Activated naive CD4-positive, alpha-beta T cell treated with anti-CD3 and anti-CD28 coated beads for 36 hours (primary cell): ENCODE measurements at regions of chr13 and their contacts with region 1.

Region 1: GRCh38 chr13:21638319-21639282 is 32.3 kb upstream of the FGF9 start:
- DNase-seq: peak; percentile 54
- H3K4me3 Mint-ChIP-seq: no peak overlapping the region
- H3K27ac Mint-ChIP-seq: no peak overlapping the region
- H3K4me1 Mint-ChIP-seq: no peaks in the 10 kb centered on the region
- H3K27me3 Mint-ChIP-seq: peaks cover 3% of the 10 kb centered on the region

Region 2: DNA sequence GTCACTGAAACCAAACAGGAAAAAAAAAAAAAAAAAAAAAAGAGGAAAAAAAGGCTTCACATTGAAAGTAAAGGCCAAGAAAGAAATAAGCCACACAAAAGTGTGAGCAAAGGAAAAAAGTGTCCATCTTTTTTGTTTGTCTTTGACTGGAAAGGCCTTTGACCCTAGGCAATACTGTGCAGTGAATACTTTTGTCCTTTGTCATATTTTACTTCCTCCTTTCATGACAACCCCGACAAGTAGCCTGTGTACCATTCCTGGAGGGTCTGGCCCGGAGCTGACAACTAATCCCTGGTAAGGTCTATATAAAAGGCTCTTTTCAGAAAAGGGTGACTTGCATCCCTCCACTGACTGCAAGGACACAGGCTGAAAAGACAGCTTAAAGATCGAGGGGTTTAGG is 21.7 kb before region 1 on chr13:
- CTCF ChIA-PET with region 1: interaction called, 16 read pairs
- intact Hi-C with region 1: no loop called
- DNase-seq: no peak
- H3K4me3 Mint-ChIP-seq: no peak overlapping the region
- H3K27ac Mint-ChIP-seq: no peak overlapping the region
- H3K4me1 Mint-ChIP-seq: no peaks in the 10 kb centered on the region
- H3K27me3 Mint-ChIP-seq: peaks cover 5% of the 10 kb centered on the region

Region 3: DNA sequence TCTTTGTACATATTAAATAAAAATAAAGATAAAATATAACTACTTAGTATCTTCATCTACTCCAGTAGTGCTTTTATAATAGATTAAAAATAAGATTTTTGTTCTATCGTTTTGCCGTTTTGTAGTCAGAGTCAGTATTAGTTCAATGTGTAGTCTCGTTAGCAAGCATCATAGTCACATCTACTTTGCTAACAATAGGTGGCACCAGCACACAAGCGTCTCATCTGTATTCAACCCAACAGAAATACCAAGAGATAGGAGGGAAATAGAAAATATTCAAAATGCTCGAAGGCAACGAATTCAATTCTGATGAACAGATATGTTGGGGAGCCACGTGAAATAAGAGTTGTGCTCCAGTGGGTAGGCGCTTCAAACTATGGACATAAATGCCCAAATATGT is 13.2 kb before region 1 on chr13:
- CTCF ChIA-PET with region 1: interaction called, 13 read pairs
- intact Hi-C with region 1: no loop called
- DNase-seq: peak; percentile 27
- H3K4me3 Mint-ChIP-seq: no peak overlapping the region
- H3K27ac Mint-ChIP-seq: no peak overlapping the region
- H3K4me1 Mint-ChIP-seq: no peaks in the 10 kb centered on the region
- H3K27me3 Mint-ChIP-seq: peaks cover 3% of the 10 kb centered on the region

Region 4: GRCh38 chr13:21670883-21671619 is 32.5 kb after region 1 on chr13 and contains the start of gene FGF9:
- CTCF ChIA-PET with region 1: interaction called, 5 read pairs
- intact Hi-C with region 1: loop called (anchors 1 kb)
- DNase-seq: peak; percentile 79
- H3K4me3 Mint-ChIP-seq: peak within 1 kb of the TSS; percentile 80
- H3K27ac Mint-ChIP-seq: no peak within 1 kb of the TSS
- H3K4me1 Mint-ChIP-seq: peaks cover 34% of the 10 kb centered on the region
- H3K27me3 Mint-ChIP-seq: peaks cover 32% of the 10 kb centered on the region
- total RNA-seq, gene FGF9: not detected

Region 5: GRCh38 chr13:21767025-21767424 is 128.4 kb after region 1 on chr13:
- CTCF ChIA-PET with region 1: interaction called, 3 read pairs
- intact Hi-C with region 1: loop called (anchors 5 kb)
- DNase-seq: no peak
- H3K4me3 Mint-ChIP-seq: no peak overlapping the region
- H3K27ac Mint-ChIP-seq: no peak overlapping the region
- H3K4me1 Mint-ChIP-seq: no peaks in the 10 kb centered on the region
- H3K27me3 Mint-ChIP-seq: peaks cover 3% of the 10 kb centered on the region

Region 6: DNA sequence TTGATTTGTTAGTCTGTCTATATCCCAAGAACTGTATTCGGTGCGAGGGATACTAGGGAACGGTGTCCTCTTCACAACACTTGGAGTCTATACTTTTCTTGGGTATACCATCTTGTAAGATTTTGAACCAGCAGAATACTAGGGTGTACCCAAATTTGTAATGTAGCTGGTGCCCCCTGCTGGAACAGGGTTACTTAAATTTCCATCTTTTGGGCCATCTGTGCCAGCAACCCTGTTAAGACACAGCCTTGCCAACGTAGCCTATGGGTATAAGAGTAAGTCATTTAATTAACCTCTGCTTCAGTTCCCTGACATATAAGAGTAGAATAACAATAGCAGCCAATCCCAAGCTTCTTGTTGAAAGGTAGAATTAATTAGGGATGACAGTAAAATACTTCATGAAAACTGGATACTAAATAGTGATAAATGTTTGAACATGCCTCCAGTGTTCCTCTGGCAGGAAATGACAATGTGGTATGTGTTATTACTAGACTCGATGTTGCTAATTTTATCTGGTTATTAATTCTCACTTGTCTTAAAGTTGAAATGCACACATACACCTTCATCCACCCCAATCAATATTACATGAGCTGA is 639.8 kb after region 1 on chr13:
- CTCF ChIA-PET with region 1: interaction called, 4 read pairs
- intact Hi-C with region 1: loop called (anchors 1 kb)
- DNase-seq: peak; percentile 84
- H3K4me3 Mint-ChIP-seq: no peak overlapping the region
- H3K27ac Mint-ChIP-seq: no peak overlapping the region
- H3K4me1 Mint-ChIP-seq: peaks cover 10% of the 10 kb centered on the region
- H3K27me3 Mint-ChIP-seq: no peaks in the 10 kb centered on the region